ENCODE measurements at regions of chr9 and their contacts with region 1.

Region 1: GRCh38 chr9:15220658-15221318 is 86.2 kb downstream of the TTC39B start:
- DNase-seq: no peak

Region 2: GRCh38 chr9:15104826-15105420 is 115.9 kb before region 1 on chr9:
- intact Hi-C with region 1: loop called in 1 of 2 experiments (anchors 10 kb)
- DNase-seq: no peak

Region 3: GRCh38 chr9:15461601-15462000 is 240.8 kb after region 1 on chr9:
- intact Hi-C with region 1: no loop called
- DNase-seq: no peak

Region 4: GRCh38 chr9:15813076-15813475 is 592.3 kb after region 1 on chr9:
- intact Hi-C with region 1: no loop called
- DNase-seq: no peak